CD14-positive monocyte (primary cell): ENCODE measurements at regions of chr10 and their contacts with region 1.

Region 1: GRCh38 chr10:112314822-112315474 is 31.7 kb downstream of the TECTB start:
- DNase-seq: peak; percentile 41 to 63 (median 62)
- H3K4me3 ChIP-seq: no peak overlapping the region
- H3K4me3 Mint-ChIP-seq: no peak overlapping the region
- H3K27ac ChIP-seq: no peak overlapping the region
- H3K27ac Mint-ChIP-seq: no peak overlapping the region
- H3K4me1 ChIP-seq: no peaks in the 10 kb centered on the region
- H3K4me1 Mint-ChIP-seq: no peaks in the 10 kb centered on the region
- H3K27me3 ChIP-seq: peaks cover 3% of the 10 kb centered on the region in 2 donors
- H3K27me3 Mint-ChIP-seq: peaks cover 5 to 32% (median 10%) of the 10 kb centered on the region in 3 donors
- CTCF ChIP-seq: peak; percentile 91

Region 2: GRCh38 chr10:110852255-110852896 is 1462.6 kb before region 1 on chr10:
- intact Hi-C with region 1: no loop called
- DNase-seq: peak in 2 of 3 donors; percentile 28 to 66
- H3K4me3 ChIP-seq: no peak overlapping the region
- H3K4me3 Mint-ChIP-seq: peak overlapping the region in 1 of 2 donors; percentile 66
- H3K27ac ChIP-seq: peak overlapping the region in 1 of 2 donors; percentile 15
- H3K27ac Mint-ChIP-seq: peak overlapping the region in 5 of 7 donors; percentile 37 to 70 (median 46)
- H3K4me1 ChIP-seq: peaks cover 57 to 64% of the 10 kb centered on the region in 2 donors
- H3K4me1 Mint-ChIP-seq: peaks cover 61% of the 10 kb centered on the region
- H3K27me3 ChIP-seq: no peaks in the 10 kb centered on the region
- H3K27me3 Mint-ChIP-seq: peaks cover 0 to 4% (median 0%) of the 10 kb centered on the region in 3 donors
- CTCF ChIP-seq: no peak

Region 3: GRCh38 chr10:112434988-112435619 is 120.2 kb after region 1 on chr10:
- intact Hi-C with region 1: loop called in 1 of 2 experiments (anchors 10 kb)
- DNase-seq: peak in 1 of 3 donors; percentile 6
- H3K4me3 ChIP-seq: no peak overlapping the region
- H3K4me3 Mint-ChIP-seq: no peak overlapping the region
- H3K27ac ChIP-seq: no peak overlapping the region
- H3K27ac Mint-ChIP-seq: no peak overlapping the region
- H3K4me1 ChIP-seq: no peaks in the 10 kb centered on the region
- H3K4me1 Mint-ChIP-seq: no peaks in the 10 kb centered on the region
- H3K27me3 ChIP-seq: no peaks in the 10 kb centered on the region
- H3K27me3 Mint-ChIP-seq: no peaks in the 10 kb centered on the region
- CTCF ChIP-seq: peak; percentile 55

Region 4: DNA sequence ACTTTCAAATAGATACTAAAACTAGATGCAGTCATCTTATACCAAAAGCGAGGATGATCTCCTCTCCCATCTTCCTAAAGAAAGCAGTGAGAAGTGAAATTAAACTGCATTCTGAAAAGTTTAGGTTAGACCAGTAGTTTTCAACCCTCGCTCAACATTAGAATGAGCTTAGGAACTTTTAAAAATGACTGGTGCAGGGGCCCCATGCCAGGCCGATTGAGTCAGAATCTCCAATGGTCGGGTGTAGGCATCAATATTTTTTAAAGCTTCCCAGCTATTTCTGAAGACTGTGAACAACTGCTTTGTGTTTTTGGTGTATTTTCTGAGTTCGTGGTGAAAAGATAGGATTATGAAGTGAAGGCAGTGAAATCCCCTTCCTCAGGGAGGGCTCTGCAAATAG is 278.1 kb after region 1 on chr10:
- intact Hi-C with region 1: no loop called
- DNase-seq: no peak
- H3K4me3 ChIP-seq: no peak overlapping the region
- H3K4me3 Mint-ChIP-seq: no peak overlapping the region
- H3K27ac ChIP-seq: no peak overlapping the region
- H3K27ac Mint-ChIP-seq: no peak overlapping the region
- H3K4me1 ChIP-seq: no peaks in the 10 kb centered on the region
- H3K4me1 Mint-ChIP-seq: no peaks in the 10 kb centered on the region
- H3K27me3 ChIP-seq: no peaks in the 10 kb centered on the region
- H3K27me3 Mint-ChIP-seq: peaks cover 0 to 1% (median 0%) of the 10 kb centered on the region in 3 donors
- CTCF ChIP-seq: no peak